Dendritic cell treated with granulocyte-macrophage colony-stimulating factor and Interleukin-4, amounts not matched to agents 40 ng/mL and 50 ng/mL, for 4 days (primary cell): ENCODE measurements at regions of chr5 and their contacts with region 1.

Region 1: GRCh38 chr5:94674490-94675382 is 56.3 kb downstream of the SLF1 start:
- H3K4me3 Mint-ChIP-seq: no peak overlapping the region
- H3K27ac Mint-ChIP-seq: no peak overlapping the region
- H3K4me1 Mint-ChIP-seq: peaks cover 10% of the 10 kb centered on the region
- H3K27me3 Mint-ChIP-seq: no peaks in the 10 kb centered on the region

Region 2: DNA sequence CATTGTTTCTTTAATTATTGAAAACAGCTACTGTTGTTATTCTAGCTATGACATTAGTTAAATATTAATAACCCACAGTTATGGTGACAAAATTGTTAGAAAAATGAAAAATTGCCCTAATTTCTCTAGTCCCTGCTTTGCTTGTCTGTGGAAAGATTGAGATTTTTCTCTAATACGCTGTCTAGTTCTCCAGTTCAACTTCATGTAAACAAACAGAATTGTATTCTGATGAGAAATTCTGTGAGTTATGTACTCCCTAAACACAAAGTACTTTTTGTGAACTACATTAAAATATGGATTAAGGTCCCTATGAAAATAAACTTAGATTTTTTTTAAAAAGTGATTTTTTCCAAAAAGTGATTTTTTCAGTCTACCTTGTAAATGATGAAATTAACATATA is 47.5 kb before region 1 on chr5:
- intact Hi-C with region 1: loop called (anchors 5 kb)
- H3K4me3 Mint-ChIP-seq: no peak overlapping the region
- H3K27ac Mint-ChIP-seq: no peak overlapping the region
- H3K4me1 Mint-ChIP-seq: no peaks in the 10 kb centered on the region
- H3K27me3 Mint-ChIP-seq: no peaks in the 10 kb centered on the region